ENCODE measurements at regions of chr2 and their contacts with region 1.

Region 1: GRCh38 chr2:25362049-25362433 is 20.3 kb upstream of the DNMT3A start:
- DNase-seq: peak; percentile 78 to 98 (median 90)
- ATAC-seq: peak; percentile 95 to 97 (median 96)
- H3K4me3 ChIP-seq: peak overlapping the region; percentile 66 to 75
- H3K4me3 Mint-ChIP-seq: peak overlapping the region; percentile 85 to 92 (median 88)
- H3K27ac ChIP-seq: peak overlapping the region; percentile 85
- H3K27ac Mint-ChIP-seq: peak overlapping the region; percentile 95 to 96
- H3K4me1 ChIP-seq: peaks cover 5 to 28% of the 10 kb centered on the region in 2 experiments
- H3K4me1 Mint-ChIP-seq: peaks cover 15 to 26% (median 25%) of the 10 kb centered on the region in 3 donors
- H3K27me3 ChIP-seq: no peaks in the 10 kb centered on the region
- H3K27me3 Mint-ChIP-seq: no peaks in the 10 kb centered on the region

Region 2: DNA sequence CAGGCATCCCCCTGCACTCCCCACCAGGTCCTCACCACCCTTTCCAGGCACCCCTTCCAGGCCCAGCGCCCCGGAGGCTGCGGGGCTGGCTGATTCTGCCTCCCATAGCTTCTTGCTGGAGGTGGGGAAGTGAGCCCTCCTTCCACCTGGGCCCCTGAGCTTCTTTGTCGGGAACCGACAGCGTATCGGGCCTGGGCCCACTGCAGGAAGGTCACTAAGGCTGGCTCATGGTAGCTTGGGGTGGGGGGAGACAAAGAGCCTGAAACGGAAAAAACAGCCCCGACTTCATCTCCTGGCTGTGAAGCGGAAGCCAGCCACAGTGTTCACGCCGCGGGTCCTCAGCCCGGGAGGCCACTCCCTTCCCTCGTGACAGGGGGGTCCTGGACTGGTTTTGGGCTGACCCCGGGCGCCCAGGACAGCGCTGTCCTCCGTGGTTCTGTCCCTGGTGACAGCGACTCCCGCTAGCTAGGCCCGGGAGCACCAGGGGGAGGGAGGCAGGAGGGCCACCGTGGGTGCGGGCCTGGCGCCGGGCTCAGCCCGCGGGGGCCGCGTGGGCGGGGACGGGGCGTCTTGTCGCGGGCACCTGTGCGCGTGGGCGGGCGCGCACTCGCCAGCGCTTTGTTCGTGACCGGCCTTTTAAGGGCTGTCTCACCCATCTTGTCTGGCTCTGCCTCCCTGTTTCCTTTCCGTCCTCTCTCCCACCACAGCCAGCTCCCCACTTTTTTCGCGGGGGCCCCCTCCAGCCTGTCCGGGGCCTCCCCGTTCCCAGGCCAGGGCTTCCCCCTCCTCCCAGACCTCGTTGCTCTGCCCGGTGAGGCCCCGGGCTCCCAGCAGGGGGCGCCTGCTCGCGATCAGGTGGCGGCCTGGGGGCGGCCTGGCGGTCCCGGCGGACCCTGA is 85.2 kb before region 1 on chr2:
- CTCF ChIA-PET with region 1: interaction called, 4 to 12 read pairs
- POLR2A ChIA-PET with region 1: no interaction called
- DNase-seq: peak; percentile 32 to 82 (median 62)
- ATAC-seq: peak; percentile 36 to 68 (median 66)
- H3K4me3 ChIP-seq: peak overlapping the region; percentile 33 to 48
- H3K4me3 Mint-ChIP-seq: peak overlapping the region; percentile 61 to 72 (median 71)
- H3K27ac ChIP-seq: peak overlapping the region; percentile 96
- H3K27ac Mint-ChIP-seq: peak overlapping the region; percentile 96 to 99
- H3K4me1 ChIP-seq: peaks cover 56 to 85% of the 10 kb centered on the region in 2 experiments
- H3K4me1 Mint-ChIP-seq: peaks cover 79 to 81% (median 80%) of the 10 kb centered on the region in 3 donors
- H3K27me3 ChIP-seq: no peaks in the 10 kb centered on the region
- H3K27me3 Mint-ChIP-seq: no peaks in the 10 kb centered on the region

Region 3: DNA sequence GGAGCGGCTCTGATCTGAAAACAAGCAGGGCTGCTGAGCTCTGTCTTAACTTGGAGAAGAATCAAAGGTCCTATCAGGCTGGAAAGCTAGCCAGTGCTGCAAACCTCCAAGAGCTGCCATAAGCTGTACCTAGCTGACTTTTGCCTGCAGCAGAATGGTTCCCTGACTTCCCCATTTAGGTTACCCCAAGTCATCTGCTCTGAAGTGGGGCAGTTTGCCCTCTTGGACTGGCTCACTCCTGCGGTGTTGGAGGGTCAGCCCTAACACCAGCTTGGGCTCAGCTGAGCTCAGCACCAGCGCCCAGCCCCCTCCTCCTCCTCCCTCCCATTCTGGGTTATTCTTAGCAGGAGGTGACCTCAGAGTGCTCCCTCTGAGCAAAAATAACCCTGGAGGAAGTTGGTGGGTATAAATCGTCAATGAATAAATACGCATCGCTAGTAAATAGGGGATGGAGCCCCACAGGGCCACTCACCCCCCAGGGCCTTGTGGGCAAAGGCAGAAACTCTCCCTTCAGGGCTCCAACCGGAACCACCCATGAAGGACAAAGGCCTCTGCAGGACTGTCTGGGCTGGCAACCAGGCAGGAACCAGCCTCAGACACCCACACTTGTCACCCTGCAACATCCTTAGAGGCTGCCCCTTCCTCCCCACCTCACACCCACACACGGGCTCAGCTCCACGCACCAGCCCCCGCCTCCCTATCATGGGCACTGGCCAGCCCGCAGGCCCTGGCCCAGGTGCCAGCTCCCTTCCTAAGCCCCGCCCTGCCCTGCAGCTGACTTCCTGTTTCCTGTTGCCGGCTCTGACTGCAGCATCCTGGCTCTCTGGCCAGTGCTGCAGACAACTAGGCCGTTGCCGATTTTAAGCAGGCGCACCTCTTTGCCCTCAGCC is 67.2 kb before region 1 on chr2:
- CTCF ChIA-PET with region 1: interaction called in 1 of 2 experiments, 10 read pairs
- POLR2A ChIA-PET with region 1: no interaction called
- DNase-seq: peak; percentile 62 to 85 (median 75)
- ATAC-seq: peak; percentile 84 to 93 (median 90)
- H3K4me3 ChIP-seq: peak overlapping the region in 1 of 2 donors; percentile 25
- H3K4me3 Mint-ChIP-seq: peak overlapping the region; percentile 53 to 77 (median 55)
- H3K27ac ChIP-seq: peak overlapping the region; percentile 92
- H3K27ac Mint-ChIP-seq: peak overlapping the region; percentile 96 to 97
- H3K4me1 ChIP-seq: peaks cover 25 to 78% of the 10 kb centered on the region in 2 experiments
- H3K4me1 Mint-ChIP-seq: peaks cover 52 to 57% (median 56%) of the 10 kb centered on the region in 3 donors
- H3K27me3 ChIP-seq: no peaks in the 10 kb centered on the region
- H3K27me3 Mint-ChIP-seq: no peaks in the 10 kb centered on the region

Region 4: DNA sequence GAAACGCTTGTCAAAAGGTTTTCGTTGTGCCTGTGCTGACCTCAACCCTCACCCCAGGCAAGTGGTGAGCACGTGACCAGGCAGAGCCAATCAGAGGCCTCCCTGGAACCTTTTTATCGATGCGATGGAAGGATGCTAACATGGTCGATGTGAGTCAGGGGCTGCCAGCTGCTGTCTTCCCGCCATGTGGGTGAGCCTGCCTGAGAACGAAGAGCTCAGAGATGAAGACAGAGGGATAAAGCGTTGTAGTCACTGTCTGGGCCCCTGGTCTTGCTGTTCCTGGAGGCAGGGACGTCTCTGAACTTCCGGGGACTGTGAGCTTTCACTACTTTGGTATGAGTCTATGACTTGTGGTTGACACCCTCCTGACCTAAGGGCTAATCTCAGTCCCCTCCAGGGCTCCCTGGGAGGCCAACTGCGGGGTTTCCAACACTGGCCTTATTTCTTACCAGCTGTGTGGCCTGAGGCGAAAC is 39.0 kb before region 1 on chr2:
- CTCF ChIA-PET with region 1: interaction called, 3 to 10 read pairs
- POLR2A ChIA-PET with region 1: interaction called in 1 of 2 experiments, 3 read pairs
- DNase-seq: peak in 30 of 35 experiments; percentile 28 to 72 (median 46)
- ATAC-seq: peak; percentile 43 to 72 (median 60)
- H3K4me3 ChIP-seq: peak overlapping the region in 1 of 2 donors; percentile 49
- H3K4me3 Mint-ChIP-seq: peak overlapping the region; percentile 70 to 79 (median 71)
- H3K27ac ChIP-seq: peak overlapping the region; percentile 36
- H3K27ac Mint-ChIP-seq: peak overlapping the region; percentile 87 to 90
- H3K4me1 ChIP-seq: peaks cover 0 to 33% of the 10 kb centered on the region in 2 experiments
- H3K4me1 Mint-ChIP-seq: peaks cover 53 to 61% (median 56%) of the 10 kb centered on the region in 3 donors
- H3K27me3 ChIP-seq: no peaks in the 10 kb centered on the region
- H3K27me3 Mint-ChIP-seq: no peaks in the 10 kb centered on the region

Region 5: GRCh38 chr2:25376750-25377621 is 14.9 kb after region 1 on chr2:
- CTCF ChIA-PET with region 1: interaction called, 21 to 55 read pairs
- POLR2A ChIA-PET with region 1: interaction called in 1 of 2 experiments, 17 read pairs
- DNase-seq: peak; percentile 82 to 96 (median 90)
- ATAC-seq: peak; percentile 99 to 100 (median 100)
- H3K4me3 ChIP-seq: peak overlapping the region in 1 of 2 donors; percentile 20
- H3K4me3 Mint-ChIP-seq: peak overlapping the region; percentile 51 to 78 (median 62)
- H3K27ac ChIP-seq: peak overlapping the region; percentile 87
- H3K27ac Mint-ChIP-seq: peak overlapping the region; percentile 90 to 94
- H3K4me1 ChIP-seq: peaks cover 11 to 43% of the 10 kb centered on the region in 2 experiments
- H3K4me1 Mint-ChIP-seq: peaks cover 36 to 39% (median 38%) of the 10 kb centered on the region in 3 donors
- H3K27me3 ChIP-seq: no peaks in the 10 kb centered on the region
- H3K27me3 Mint-ChIP-seq: no peaks in the 10 kb centered on the region